ENCODE measurements at regions of chr9 and their contacts with region 1.

Region 1: GRCh38 chr9:97982683-97983588 is at the start of gene ANP32B:
- DNase-seq: peak; percentile 96
- ATAC-seq: peak; percentile 94
- total RNA-seq, gene ANP32B: 54.5 TPM

Region 2: GRCh38 chr9:97632985-97633858 is 349.7 kb before region 1 on chr9 and contains the starts of genes NCBP1 and TSTD2:
- intact Hi-C with region 1: loop called (anchors 10 kb)
- DNase-seq: peak; percentile 99
- ATAC-seq: peak; percentile 95
- total RNA-seq, gene NCBP1: 20.0 TPM
- total RNA-seq, gene TSTD2: 24.8 TPM

Region 3: DNA sequence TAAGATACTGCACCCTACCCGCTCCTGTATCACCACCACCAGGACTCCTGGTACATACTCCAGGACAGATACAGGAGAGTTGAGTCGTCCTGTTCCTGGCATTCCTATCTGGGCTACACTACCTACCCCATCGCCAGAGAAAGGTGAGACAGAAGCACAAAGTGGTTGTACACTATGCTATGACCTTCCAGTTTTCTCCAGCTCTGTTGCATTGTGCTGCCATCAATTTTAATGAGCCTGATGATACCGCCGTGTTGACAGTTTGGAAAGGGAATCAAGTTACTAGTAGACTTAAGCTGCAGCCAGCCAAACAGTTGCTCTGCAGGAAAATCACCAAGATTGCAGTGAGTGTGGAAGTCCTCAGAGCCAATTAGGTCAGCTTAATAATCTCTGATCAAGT is 35.4 kb after region 1 on chr9:
- intact Hi-C with region 1: loop called (anchors 5 kb)
- DNase-seq: no peak
- ATAC-seq: peak; percentile 52

Region 4: GRCh38 chr9:98037357-98037756 is 54.4 kb after region 1 on chr9:
- intact Hi-C with region 1: loop called (anchors 2 kb)
- DNase-seq: no peak
- ATAC-seq: peak; percentile 91

Region 5: DNA sequence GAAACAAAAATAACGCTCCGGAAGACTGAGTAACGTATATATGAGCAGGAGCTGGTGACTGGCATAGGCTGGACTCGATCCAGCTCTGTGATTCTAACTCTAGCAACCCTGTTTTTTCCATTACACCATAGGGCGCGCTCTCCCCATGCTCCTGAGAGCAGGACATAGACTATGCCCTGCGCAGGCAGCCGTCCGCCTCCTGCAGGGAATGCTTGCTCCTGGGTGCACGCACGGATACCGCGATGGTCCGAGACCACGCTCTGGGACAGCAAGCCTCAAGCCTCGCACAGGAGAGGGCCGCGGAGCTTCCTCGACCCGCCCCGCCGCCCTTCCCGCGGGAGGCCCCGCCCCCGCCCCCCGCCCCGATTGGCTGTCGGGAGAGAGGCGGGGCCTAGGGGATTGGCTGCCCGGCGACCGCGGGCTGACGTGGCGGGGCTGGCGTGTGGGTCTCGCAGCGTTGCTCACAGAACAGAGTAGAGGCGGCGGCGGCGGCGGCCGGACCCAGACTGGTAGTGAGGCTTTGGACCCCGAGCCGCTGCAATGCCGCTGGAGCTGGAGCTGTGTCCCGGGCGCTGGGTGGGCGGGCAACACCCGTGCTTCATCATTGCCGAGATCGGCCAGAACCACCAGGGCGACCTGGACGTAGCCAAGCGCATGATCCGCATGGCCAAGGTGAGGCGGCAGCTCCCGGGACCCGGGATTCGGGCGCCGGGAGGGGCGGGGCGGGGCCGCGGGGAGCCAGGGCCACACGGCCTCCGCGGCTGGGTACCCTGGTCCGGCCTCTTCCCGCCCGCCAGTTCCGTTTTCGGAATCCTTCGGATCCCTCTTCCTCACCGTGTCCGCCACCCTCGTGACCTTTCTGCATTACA is 73.6 kb after region 1 on chr9 and contains the start of gene NANS:
- intact Hi-C with region 1: loop called (anchors 1 kb)
- DNase-seq: peak; percentile 96
- ATAC-seq: peak; percentile 99
- total RNA-seq, gene NANS: 37.2 TPM

Region 6: GRCh38 chr9:98255578-98256296 is 272.8 kb after region 1 on chr9 and contains the start of gene TBC1D2:
- intact Hi-C with region 1: loop called (anchors 5 kb)
- DNase-seq: peak; percentile 98
- ATAC-seq: peak; percentile 98
- total RNA-seq, gene TBC1D2: 2.3 TPM

Measured in Right ventricle myocardium inferior (tissue), 1 donor.